ENCODE measurements at regions of chr20 and their contacts with region 1.

Region 1: GRCh38 chr20:45095753-45096371 is 5.1 kb downstream of the KCNS1 start:
- DNase-seq: peak; percentile 69
- H3K4me3 Mint-ChIP-seq: no peak overlapping the region
- H3K27ac Mint-ChIP-seq: no peak overlapping the region
- H3K4me1 Mint-ChIP-seq: peaks cover 13% of the 10 kb centered on the region
- H3K27me3 Mint-ChIP-seq: peaks cover 30% of the 10 kb centered on the region

Region 2: GRCh38 chr20:44747166-44748004 is 348.5 kb before region 1 on chr20:
- CTCF ChIA-PET with region 1: no interaction called
- POLR2A ChIA-PET with region 1: no interaction called
- intact Hi-C with region 1: loop called (anchors 5 kb)
- DNase-seq: peak; percentile 81
- H3K4me3 Mint-ChIP-seq: peak overlapping the region; percentile 67
- H3K27ac Mint-ChIP-seq: no peak overlapping the region
- H3K4me1 Mint-ChIP-seq: peaks cover 11% of the 10 kb centered on the region
- H3K27me3 Mint-ChIP-seq: peaks cover 18% of the 10 kb centered on the region

Region 3: GRCh38 chr20:44966030-44966961 is 129.6 kb before region 1 on chr20 and contains the start of gene STK4:
- CTCF ChIA-PET with region 1: interaction called, 19 read pairs
- POLR2A ChIA-PET with region 1: no interaction called
- intact Hi-C with region 1: loop called (anchors 5 kb)
- DNase-seq: peak; percentile 97
- H3K4me3 Mint-ChIP-seq: peak within 1 kb of the TSS; percentile 95
- H3K27ac Mint-ChIP-seq: peak within 1 kb of the TSS; percentile 99
- H3K4me1 Mint-ChIP-seq: peaks cover 58% of the 10 kb centered on the region
- H3K27me3 Mint-ChIP-seq: no peaks in the 10 kb centered on the region
- total RNA-seq, gene STK4: 126 to 128 TPM

Region 4: GRCh38 chr20:45020236-45020886 is 75.5 kb before region 1 on chr20:
- CTCF ChIA-PET with region 1: interaction called, 100 read pairs
- POLR2A ChIA-PET with region 1: no interaction called
- intact Hi-C with region 1: no loop called
- DNase-seq: no peak
- H3K4me3 Mint-ChIP-seq: no peak overlapping the region
- H3K27ac Mint-ChIP-seq: no peak overlapping the region
- H3K4me1 Mint-ChIP-seq: peaks cover 69% of the 10 kb centered on the region
- H3K27me3 Mint-ChIP-seq: no peaks in the 10 kb centered on the region

Region 5: GRCh38 chr20:45044084-45044573 is 51.7 kb before region 1 on chr20:
- CTCF ChIA-PET with region 1: interaction called, 185 read pairs
- POLR2A ChIA-PET with region 1: interaction called, 10 read pairs
- intact Hi-C with region 1: loop called (anchors 1 kb)
- DNase-seq: peak; percentile 41
- H3K4me3 Mint-ChIP-seq: no peak overlapping the region
- H3K27ac Mint-ChIP-seq: peak overlapping the region; percentile 75
- H3K4me1 Mint-ChIP-seq: peaks cover 74% of the 10 kb centered on the region
- H3K27me3 Mint-ChIP-seq: no peaks in the 10 kb centered on the region

Region 6: GRCh38 chr20:45070932-45071632 is 24.8 kb before region 1 on chr20:
- CTCF ChIA-PET with region 1: interaction called, 18 read pairs
- POLR2A ChIA-PET with region 1: no interaction called
- intact Hi-C with region 1: no loop called
- DNase-seq: no peak
- H3K4me3 Mint-ChIP-seq: no peak overlapping the region
- H3K27ac Mint-ChIP-seq: no peak overlapping the region
- H3K4me1 Mint-ChIP-seq: peaks cover 60% of the 10 kb centered on the region
- H3K27me3 Mint-ChIP-seq: no peaks in the 10 kb centered on the region

Region 7: DNA sequence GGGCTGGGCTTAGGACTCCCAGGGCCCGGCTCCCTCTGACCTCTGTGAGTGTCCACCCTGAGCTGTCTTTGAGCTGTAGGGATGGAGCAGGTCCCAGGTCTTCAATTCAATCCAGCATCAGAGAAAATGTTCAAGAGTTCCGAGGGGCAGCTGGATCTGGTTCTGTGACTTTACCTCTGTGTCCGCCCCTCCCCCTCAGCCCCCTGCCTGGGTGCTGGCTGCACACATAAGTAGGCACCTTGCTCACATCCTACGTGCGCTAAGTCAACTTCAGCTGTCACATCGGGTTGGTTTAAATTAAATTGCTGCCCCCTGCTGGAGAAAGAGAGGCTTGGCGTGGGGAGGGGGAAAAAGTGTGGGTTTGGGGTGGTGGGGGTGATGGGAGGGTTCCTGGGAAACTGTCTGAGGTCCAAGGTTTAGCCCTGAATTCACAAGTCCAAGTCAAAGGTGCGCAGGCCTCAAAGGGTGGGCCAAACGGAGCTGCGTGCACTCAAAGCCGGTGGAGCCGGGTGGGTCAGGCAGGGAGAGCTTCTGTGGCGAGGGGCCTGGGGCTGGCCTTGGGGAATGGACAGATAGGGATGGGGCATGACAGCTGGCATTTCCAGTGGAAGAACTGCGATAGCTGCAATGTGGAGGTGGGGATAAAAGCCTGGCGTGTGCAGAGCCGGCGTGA is 16.1 kb after region 1 on chr20:
- CTCF ChIA-PET with region 1: interaction called, 108 read pairs
- POLR2A ChIA-PET with region 1: no interaction called
- intact Hi-C with region 1: loop called (anchors 2 kb)
- DNase-seq: peak; percentile 37
- H3K4me3 Mint-ChIP-seq: no peak overlapping the region
- H3K27ac Mint-ChIP-seq: no peak overlapping the region
- H3K4me1 Mint-ChIP-seq: peaks cover 9% of the 10 kb centered on the region
- H3K27me3 Mint-ChIP-seq: no peaks in the 10 kb centered on the region

Region 8: DNA sequence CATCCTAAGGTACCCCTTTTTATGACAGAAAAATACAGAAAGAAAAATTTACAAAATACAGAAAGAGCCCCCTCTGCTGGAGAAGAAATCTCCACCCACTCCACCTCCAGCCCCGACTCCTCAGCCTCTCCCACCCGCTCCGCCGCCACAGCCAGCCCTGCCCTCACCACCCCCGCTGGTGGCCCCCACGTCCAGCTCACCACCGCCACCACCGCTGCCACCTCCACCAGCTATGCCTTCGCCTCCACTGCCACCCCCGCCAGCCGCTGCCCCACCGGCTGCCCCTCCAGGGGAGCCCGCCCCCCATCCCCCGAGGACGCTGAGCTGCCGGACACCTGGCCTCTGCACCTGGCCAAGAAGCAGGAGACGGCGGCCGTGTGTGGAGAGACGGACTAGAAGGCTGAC is 391.4 kb after region 1 on chr20:
- CTCF ChIA-PET with region 1: no interaction called
- POLR2A ChIA-PET with region 1: no interaction called
- intact Hi-C with region 1: no loop called
- DNase-seq: no peak
- H3K4me3 Mint-ChIP-seq: no peak overlapping the region
- H3K27ac Mint-ChIP-seq: no peak overlapping the region
- H3K4me1 Mint-ChIP-seq: no peaks in the 10 kb centered on the region
- H3K27me3 Mint-ChIP-seq: peaks cover 20% of the 10 kb centered on the region

Measured in activated CD4-positive, alpha-beta memory T cell treated with anti-CD3 and anti-CD28 coated beads for 36 hours (primary cell).